ENCODE measurements at regions of chr16 and their contacts with region 1.

Region 1: DNA sequence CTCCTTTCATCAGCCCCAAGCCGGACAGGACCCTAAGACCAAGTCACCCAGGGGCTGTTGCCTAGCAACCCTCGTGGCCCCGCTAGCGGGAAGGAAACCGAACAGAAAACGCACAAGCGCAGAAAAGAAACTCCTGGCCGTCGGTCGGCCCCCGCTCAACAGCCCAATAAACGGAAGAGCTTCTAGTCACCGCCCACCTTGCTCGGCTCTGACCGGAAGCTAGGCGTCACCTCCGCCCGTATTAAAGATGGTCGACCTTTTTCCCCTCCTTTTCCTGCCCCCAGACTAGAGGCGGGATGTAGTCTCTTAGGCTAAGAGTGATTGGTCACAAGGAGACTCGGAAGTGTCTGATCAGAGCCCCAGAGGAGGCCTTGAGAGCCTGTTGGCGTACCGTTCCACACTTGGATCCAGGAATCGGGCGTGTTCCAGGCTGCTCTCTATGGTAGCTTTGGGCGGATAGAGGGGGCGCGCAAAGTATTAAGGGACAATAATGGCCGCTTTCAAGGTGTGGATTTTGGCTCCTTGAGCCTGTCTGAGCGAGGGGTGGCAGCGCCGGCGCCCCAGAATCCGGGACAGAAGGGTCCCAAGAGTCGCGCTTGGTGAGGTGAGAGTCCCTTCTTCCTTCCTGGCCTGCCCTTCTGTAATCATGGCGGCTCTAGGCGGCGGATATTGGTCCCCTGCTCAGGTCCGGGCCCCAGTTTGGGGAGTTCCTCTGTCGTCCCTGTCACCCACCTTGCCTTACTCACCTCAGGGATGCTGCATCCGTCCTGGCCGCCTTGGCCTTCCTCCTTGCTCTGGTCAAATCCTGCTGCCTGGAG is at the starts of genes DHX38 and TXNL4B:
- DNase-seq: peak; percentile 77
- ATAC-seq: peak; percentile 96
- H3K4me3 Mint-ChIP-seq: peak within 1 kb of the TSS; percentile 99
- H3K27ac Mint-ChIP-seq: peak within 1 kb of the TSS; percentile 96
- H3K4me1 Mint-ChIP-seq: peaks cover 47% of the 10 kb centered on the region
- H3K27me3 Mint-ChIP-seq: no peaks in the 10 kb centered on the region
- CTCF ChIP-seq: no peak
- total RNA-seq, gene DHX38: 107 and 118 TPM in 2 replicates
- total RNA-seq, gene TXNL4B: 13.1 and 13.8 TPM in 2 replicates

Region 2: DNA sequence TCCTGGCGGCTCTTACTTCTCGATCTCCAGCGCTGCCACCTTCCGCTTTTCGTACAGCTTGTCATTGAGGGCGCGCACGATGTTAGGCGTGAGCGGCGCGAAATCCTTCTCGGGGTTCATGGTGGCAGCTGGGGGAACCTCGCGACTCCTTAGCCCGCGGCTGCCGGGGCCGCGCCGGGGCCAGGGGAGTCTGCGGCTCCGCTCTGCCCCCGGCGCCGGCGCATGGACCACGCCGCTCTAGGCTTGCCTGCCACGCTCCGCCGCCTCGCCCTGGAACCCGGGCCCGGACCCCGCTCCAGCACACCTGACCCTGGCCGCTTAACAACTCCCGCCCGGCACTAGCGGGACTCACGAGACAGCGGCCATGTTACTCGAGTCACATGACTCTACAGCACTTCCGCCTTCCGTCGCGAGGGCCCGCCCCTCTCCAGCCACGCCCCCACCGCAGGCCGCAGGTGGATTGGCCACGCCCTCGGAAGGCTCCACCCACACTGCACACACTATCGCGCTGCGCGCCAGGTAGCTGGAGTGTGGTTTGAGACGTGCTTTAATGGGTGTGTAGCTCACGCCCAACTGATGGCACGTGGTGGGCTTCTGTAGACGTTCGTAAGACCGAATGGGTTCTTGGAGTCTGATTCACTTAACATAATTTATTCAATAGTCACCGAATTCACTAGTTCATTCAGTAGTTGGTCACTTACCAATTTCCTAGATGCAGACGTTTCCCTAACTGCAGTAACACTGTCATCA is 1292.7 kb before region 1 on chr16 and contains the start of gene VAC14:
- CTCF ChIA-PET with region 1: no interaction called
- POLR2A ChIA-PET with region 1: no interaction called
- intact Hi-C with region 1: loop called (anchors 10 kb)
- DNase-seq: peak; percentile 98
- ATAC-seq: peak; percentile 97
- H3K4me3 Mint-ChIP-seq: peak within 1 kb of the TSS; percentile 92
- H3K27ac Mint-ChIP-seq: peak within 1 kb of the TSS; percentile 90
- H3K4me1 Mint-ChIP-seq: peaks cover 34% of the 10 kb centered on the region
- H3K27me3 Mint-ChIP-seq: peaks cover 2% of the 10 kb centered on the region
- CTCF ChIP-seq: no peak
- total RNA-seq, gene VAC14: 47.8 and 53.4 TPM in 2 replicates

Region 3: DNA sequence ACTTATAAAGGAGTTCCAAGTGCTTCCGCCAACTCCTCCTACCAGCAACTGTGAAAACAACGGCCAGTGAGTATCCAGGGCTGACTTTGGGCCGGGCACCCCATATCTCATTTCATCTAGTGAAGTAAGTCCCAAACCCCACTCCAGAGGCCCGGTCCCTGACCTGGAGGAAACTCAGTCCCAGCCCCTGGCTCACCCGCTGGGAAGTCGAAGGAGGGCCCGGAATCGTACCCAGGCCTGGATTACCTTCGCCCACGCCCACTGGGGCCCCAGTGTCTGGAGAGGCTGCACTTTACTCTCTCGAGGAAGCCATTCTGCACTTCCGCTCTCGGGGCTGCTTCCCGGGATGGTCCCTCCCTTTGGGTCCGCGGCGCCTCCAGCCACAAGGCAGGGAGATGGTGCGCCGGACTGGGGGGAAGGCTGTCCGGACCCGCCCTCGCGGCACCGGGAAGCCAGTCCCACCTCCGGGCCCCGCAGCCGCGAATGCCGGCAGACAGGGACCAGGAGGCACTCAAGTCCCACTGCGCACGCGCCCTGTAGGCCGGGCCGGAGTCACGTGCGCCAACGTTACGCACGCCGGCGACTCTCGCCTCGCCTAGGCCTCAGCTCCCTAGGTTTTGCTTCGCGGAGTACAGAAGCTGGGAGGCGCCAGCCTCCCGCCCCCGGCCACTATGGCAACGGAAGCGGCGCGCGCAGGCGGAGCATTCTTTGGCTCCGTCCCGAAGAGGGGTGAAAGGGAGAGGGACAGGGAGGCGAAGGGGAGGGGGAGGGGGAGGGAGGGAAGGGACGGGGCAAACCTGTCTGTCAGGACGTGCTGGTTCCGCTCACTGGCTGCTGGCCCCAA is 804.5 kb before region 1 on chr16 and contains the start of gene CMTR2:
- CTCF ChIA-PET with region 1: no interaction called
- POLR2A ChIA-PET with region 1: interaction called, 5 read pairs
- intact Hi-C with region 1: loop called (anchors 5 kb)
- DNase-seq: peak; percentile 90
- ATAC-seq: peak; percentile 89
- H3K4me3 Mint-ChIP-seq: peak within 1 kb of the TSS; percentile 89
- H3K27ac Mint-ChIP-seq: peak within 1 kb of the TSS; percentile 94
- H3K4me1 Mint-ChIP-seq: peaks cover 29% of the 10 kb centered on the region
- H3K27me3 Mint-ChIP-seq: peaks cover 19% of the 10 kb centered on the region
- CTCF ChIP-seq: no peak
- total RNA-seq, gene CMTR2: 28.6 and 35.3 TPM in 2 replicates

Region 4: DNA sequence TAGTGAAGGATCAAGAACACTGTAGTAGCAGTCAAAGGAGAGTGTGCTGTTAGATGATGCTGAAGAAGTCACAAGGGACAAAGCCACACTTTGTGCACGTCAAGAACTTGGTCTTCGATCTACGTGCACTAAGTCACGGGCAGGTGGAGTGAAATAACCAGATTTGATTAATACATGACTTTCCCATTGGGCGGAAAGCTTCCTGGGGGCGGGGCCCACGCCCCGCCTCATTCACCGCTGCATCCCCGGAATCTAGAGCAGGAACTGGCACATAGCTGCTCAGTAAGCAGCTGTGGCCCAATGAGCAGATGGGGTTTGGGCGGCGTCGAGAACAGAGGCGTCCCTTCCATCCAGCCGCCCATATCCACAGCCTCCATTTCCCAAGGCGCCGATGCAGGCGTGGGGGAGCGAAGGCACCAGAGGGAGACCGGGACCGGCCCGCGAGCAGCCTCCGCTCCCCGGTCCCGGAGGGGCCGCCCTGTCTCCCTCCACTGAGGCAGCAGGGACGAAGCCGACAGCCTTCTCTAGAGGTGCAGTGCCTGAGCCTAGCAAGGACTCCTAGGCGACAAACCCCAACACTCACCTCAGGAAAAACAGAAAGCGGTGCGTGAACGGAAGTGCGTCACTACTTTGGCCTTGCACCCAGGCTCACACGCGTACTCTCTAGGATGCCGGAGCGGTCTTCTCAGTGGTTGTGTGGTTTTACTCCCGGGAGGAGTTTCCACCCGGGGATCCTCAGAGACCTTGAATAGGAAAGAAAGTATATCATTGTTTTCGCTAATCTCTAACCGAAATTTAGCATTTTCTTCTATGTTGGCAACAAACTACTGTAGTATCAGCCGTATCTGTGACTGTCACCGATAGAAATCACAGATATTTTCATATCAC is 609.4 kb before region 1 on chr16:
- CTCF ChIA-PET with region 1: no interaction called
- POLR2A ChIA-PET with region 1: no interaction called
- intact Hi-C with region 1: loop called (anchors 1 kb)
- DNase-seq: peak; percentile 75
- ATAC-seq: peak; percentile 85
- H3K4me3 Mint-ChIP-seq: peak overlapping the region; percentile 89
- H3K27ac Mint-ChIP-seq: peak overlapping the region; percentile 92
- H3K4me1 Mint-ChIP-seq: peaks cover 17% of the 10 kb centered on the region
- H3K27me3 Mint-ChIP-seq: peaks cover 8% of the 10 kb centered on the region
- CTCF ChIP-seq: no peak

Region 5: GRCh38 chr16:71723537-71724319 is 369.9 kb before region 1 on chr16:
- CTCF ChIA-PET with region 1: no interaction called
- POLR2A ChIA-PET with region 1: interaction called, 4 read pairs
- intact Hi-C with region 1: loop called (anchors 10 kb)
- DNase-seq: peak; percentile 87
- ATAC-seq: peak; percentile 80
- H3K4me3 Mint-ChIP-seq: peak overlapping the region; percentile 85
- H3K27ac Mint-ChIP-seq: peak overlapping the region; percentile 85
- H3K4me1 Mint-ChIP-seq: peaks cover 50% of the 10 kb centered on the region
- H3K27me3 Mint-ChIP-seq: no peaks in the 10 kb centered on the region
- CTCF ChIP-seq: no peak

Region 6: GRCh38 chr16:72172105-72173034 is 78.7 kb after region 1 on chr16 and contains the start of gene PMFBP1:
- CTCF ChIA-PET with region 1: no interaction called
- POLR2A ChIA-PET with region 1: no interaction called
- intact Hi-C with region 1: loop called (anchors 1 kb)
- DNase-seq: peak; percentile 17
- ATAC-seq: peak; percentile 95
- H3K4me3 Mint-ChIP-seq: peak within 1 kb of the TSS; percentile 6
- H3K27ac Mint-ChIP-seq: peak within 1 kb of the TSS; percentile 85
- H3K4me1 Mint-ChIP-seq: peaks cover 12% of the 10 kb centered on the region
- H3K27me3 Mint-ChIP-seq: no peaks in the 10 kb centered on the region
- CTCF ChIP-seq: no peak
- total RNA-seq, gene PMFBP1: 5.7 and 5.9 TPM in 2 replicates

Measured in activated B cell treated with CpG ODN at 0.5 μM for 24 hours (primary cell).